Activated CD4-positive, alpha-beta T cell treated with anti-CD3 and anti-CD28 coated beads, Interleukin-2, amount 10 ng/mL, durations not matched to agents 24 days and 14 days (primary cell): ENCODE measurements at regions of chr15 and their contacts with region 1.

Region 1: GRCh38 chr15:44882499-44882968 is 74.0 kb upstream of the TERB2 start:
- DNase-seq: peak; percentile 72
- H3K4me3 Mint-ChIP-seq: peak overlapping the region; percentile 27
- H3K27ac Mint-ChIP-seq: peak overlapping the region; percentile 82
- H3K4me1 Mint-ChIP-seq: peaks cover 23% of the 10 kb centered on the region
- H3K27me3 Mint-ChIP-seq: no peaks in the 10 kb centered on the region

Region 2: GRCh38 chr15:45009046-45009445 is 126.5 kb after region 1 on chr15:
- intact Hi-C with region 1: loop called (anchors 5 kb)
- DNase-seq: no peak
- H3K4me3 Mint-ChIP-seq: no peak overlapping the region
- H3K27ac Mint-ChIP-seq: no peak overlapping the region
- H3K4me1 Mint-ChIP-seq: no peaks in the 10 kb centered on the region
- H3K27me3 Mint-ChIP-seq: no peaks in the 10 kb centered on the region